IMR-90 (cell line): ENCODE measurements at regions of chr11 and their contacts with region 1.

Region 1: DNA sequence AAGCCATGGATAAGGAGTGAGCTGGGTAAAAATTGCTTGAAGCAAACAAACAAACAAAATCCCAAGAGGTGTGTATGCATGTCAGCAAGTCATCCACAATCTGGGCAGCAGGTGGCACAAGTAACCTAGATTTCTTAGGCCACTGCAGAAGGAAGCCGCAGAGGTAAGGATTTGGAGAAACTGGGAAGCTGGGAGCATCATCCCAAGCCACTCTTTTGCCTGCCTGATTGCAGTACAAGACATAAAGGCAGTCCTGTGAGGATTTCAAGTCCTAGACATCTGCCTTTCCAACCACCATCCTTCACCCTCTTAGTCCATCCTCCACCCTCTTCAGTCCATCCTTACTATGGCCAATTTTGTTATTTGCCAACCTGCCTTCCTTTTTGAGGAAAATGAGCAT is 67.2 kb upstream of the BMAL1 start:
- DNase-seq: peak; percentile 84
- ATAC-seq: peak; percentile 52
- H3K4me3 ChIP-seq: no peak overlapping the region
- H3K27ac ChIP-seq: no peak overlapping the region
- H3K4me1 ChIP-seq: peaks cover 20% of the 10 kb centered on the region
- H3K27me3 ChIP-seq: no peaks in the 10 kb centered on the region
- CTCF ChIP-seq: peak; percentile 76
- POLR2A ChIP-seq: 0 out of 2 replicates have a peak, but pooled peaks have one; percentile 26
- RAD21 ChIP-seq: peak; percentile 95

Region 2: GRCh38 chr11:12864316-12865156 is 345.9 kb before region 1 on chr11:
- CTCF ChIA-PET with region 1: no interaction called
- POLR2A ChIA-PET with region 1: no interaction called
- dilution Hi-C with region 1: no loop called
- in situ Hi-C with region 1: no loop called
- intact Hi-C with region 1: no loop called
- DNase-seq: peak; percentile 96
- ATAC-seq: peak; percentile 76
- H3K4me3 ChIP-seq: no peak overlapping the region
- H3K27ac ChIP-seq: no peak overlapping the region
- H3K4me1 ChIP-seq: peaks cover 17% of the 10 kb centered on the region
- H3K27me3 ChIP-seq: no peaks in the 10 kb centered on the region
- CTCF ChIP-seq: no peak
- POLR2A ChIP-seq: no peak
- RAD21 ChIP-seq: peak; percentile 23; the same call in 1 of the 2 replicates

Region 3: DNA sequence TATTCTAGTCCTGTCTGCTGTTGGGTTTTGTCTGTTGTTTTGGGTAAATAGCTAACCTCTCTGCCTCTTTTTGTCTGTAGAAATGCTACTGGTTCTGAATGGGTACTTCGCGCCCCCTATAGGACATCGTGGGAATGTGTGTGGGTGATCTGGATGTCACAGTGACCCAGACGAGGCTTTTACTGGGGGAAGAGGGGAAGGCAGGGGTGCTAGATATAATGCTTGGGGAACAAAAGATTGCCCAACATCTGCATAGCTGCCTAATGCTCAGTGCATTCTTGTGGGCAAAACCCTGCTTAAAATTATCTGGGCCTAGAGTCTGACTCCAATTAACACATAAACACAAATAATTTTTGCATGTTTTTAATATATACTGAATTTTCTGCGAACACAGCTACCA is 124.9 kb after region 1 on chr11:
- CTCF ChIA-PET with region 1: interaction called, 39 read pairs
- POLR2A ChIA-PET with region 1: no interaction called
- dilution Hi-C with region 1: no loop called
- in situ Hi-C with region 1: loop called (anchors 5 kb)
- intact Hi-C with region 1: loop called (anchors 2 kb)
- DNase-seq: peak; percentile 66
- ATAC-seq: peak; percentile 23
- H3K4me3 ChIP-seq: no peak overlapping the region
- H3K27ac ChIP-seq: no peak overlapping the region
- H3K4me1 ChIP-seq: peaks cover 29% of the 10 kb centered on the region
- H3K27me3 ChIP-seq: no peaks in the 10 kb centered on the region
- CTCF ChIP-seq: peak; percentile 78
- POLR2A ChIP-seq: no peak
- RAD21 ChIP-seq: peak; percentile 72

Region 4: DNA sequence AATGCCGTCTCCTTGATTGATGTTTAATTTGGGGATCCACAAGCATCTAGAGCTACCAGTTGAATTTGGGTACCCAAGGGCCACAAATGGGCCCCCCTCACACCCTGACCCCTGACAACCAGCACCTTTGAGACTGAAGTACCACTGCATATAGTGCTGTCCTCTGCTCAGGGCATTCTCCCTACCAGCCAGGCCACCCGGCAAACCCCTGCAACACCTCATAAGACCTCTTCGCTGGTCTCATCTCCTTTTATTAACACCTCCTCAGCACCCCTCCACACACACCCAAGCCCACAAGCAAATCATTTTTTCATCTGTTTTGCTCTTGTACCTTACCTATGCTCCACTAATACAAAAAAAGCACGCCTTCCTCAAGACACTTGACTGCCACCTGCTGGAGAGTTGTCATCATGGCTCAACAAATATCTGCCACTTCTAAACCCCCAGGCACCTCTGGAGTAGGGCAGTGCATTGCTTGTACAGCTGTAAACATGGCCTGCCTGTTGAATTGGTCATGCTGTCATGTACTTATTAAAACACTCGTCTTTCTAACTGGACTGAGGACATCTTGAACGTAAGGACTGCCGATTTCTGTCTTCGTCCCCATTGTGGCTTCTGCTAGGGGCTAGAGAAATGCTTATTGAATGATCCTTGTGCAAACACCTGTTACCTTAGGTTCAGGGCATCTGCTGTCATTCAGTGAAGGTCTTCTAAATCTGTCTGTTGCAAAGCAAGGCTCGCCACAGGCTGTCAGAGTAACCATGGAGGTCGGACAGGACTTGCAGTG is 133.7 kb after region 1 on chr11:
- CTCF ChIA-PET with region 1: interaction called, 6 read pairs
- POLR2A ChIA-PET with region 1: no interaction called
- dilution Hi-C with region 1: no loop called
- in situ Hi-C with region 1: loop called (anchors 5 kb)
- intact Hi-C with region 1: loop called (anchors 1 kb)
- DNase-seq: peak; percentile 79
- ATAC-seq: peak; percentile 74
- H3K4me3 ChIP-seq: no peak overlapping the region
- H3K27ac ChIP-seq: no peak overlapping the region
- H3K4me1 ChIP-seq: peaks cover 11% of the 10 kb centered on the region
- H3K27me3 ChIP-seq: no peaks in the 10 kb centered on the region
- CTCF ChIP-seq: peak; percentile 87
- POLR2A ChIP-seq: no peak
- RAD21 ChIP-seq: peak; percentile 90

Region 5: DNA sequence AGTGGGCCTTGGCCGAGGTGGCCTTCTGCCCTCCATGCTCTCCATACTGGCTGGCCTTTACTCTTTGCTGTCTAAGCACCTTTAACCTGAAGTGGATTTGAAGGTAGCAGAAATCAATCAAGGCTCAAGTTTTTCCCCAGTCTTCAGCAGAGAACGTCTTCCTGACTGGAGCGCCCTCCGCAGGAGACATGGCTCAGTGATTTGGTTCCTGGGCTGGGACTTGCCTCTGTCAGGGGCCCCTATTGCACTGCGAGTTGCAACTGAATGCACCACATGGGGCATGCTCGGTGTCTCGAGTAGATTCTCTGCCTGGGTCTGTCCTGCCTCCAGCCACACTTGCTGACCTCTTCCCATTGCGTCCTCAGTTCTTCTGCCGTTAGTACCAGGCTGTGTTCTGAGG is 146.8 kb after region 1 on chr11:
- CTCF ChIA-PET with region 1: interaction called, 10 read pairs
- POLR2A ChIA-PET with region 1: no interaction called
- dilution Hi-C with region 1: no loop called
- in situ Hi-C with region 1: no loop called
- intact Hi-C with region 1: no loop called
- DNase-seq: no peak
- ATAC-seq: no peak
- H3K4me3 ChIP-seq: no peak overlapping the region
- H3K27ac ChIP-seq: no peak overlapping the region
- H3K4me1 ChIP-seq: peaks cover 2% of the 10 kb centered on the region
- H3K27me3 ChIP-seq: no peaks in the 10 kb centered on the region
- CTCF ChIP-seq: no peak
- POLR2A ChIP-seq: no peak
- RAD21 ChIP-seq: no peak

Region 6: GRCh38 chr11:13384908-13385640 is 174.7 kb after region 1 on chr11:
- CTCF ChIA-PET with region 1: interaction called, 10 read pairs
- POLR2A ChIA-PET with region 1: interaction called, 4 read pairs
- dilution Hi-C with region 1: no loop called
- in situ Hi-C with region 1: no loop called
- intact Hi-C with region 1: loop called (anchors 1 kb)
- DNase-seq: peak; percentile 68
- ATAC-seq: peak; percentile 85
- H3K4me3 ChIP-seq: no peak overlapping the region
- H3K27ac ChIP-seq: no peak overlapping the region
- H3K4me1 ChIP-seq: no peaks in the 10 kb centered on the region; the same call in 1 of the 2 replicates
- H3K27me3 ChIP-seq: no peaks in the 10 kb centered on the region
- CTCF ChIP-seq: peak; percentile 73
- POLR2A ChIP-seq: no peak
- RAD21 ChIP-seq: peak; percentile 64

Region 7: GRCh38 chr11:13462901-13463778 is 252.7 kb after region 1 on chr11 and contains the start of gene BTBD10:
- CTCF ChIA-PET with region 1: interaction called, 3 read pairs
- POLR2A ChIA-PET with region 1: interaction called, 5 read pairs
- dilution Hi-C with region 1: no loop called
- in situ Hi-C with region 1: no loop called
- intact Hi-C with region 1: loop called (anchors 5 kb)
- DNase-seq: peak; percentile 93
- ATAC-seq: peak; percentile 98
- H3K4me3 ChIP-seq: peak within 1 kb of the TSS; percentile 82
- H3K27ac ChIP-seq: peak within 1 kb of the TSS; percentile 83
- H3K4me1 ChIP-seq: peaks cover 3% of the 10 kb centered on the region
- H3K27me3 ChIP-seq: peaks cover 6% of the 10 kb centered on the region
- CTCF ChIP-seq: no peak
- POLR2A ChIP-seq: peak; percentile 85
- RAD21 ChIP-seq: no peak
- total RNA-seq, gene BTBD10: 59.9 and 84.2 TPM in 2 replicates